Head of caudate nucleus (tissue), 42 donors: ENCODE measurements at regions of chr17 and their contacts with region 1.

Region 1: DNA sequence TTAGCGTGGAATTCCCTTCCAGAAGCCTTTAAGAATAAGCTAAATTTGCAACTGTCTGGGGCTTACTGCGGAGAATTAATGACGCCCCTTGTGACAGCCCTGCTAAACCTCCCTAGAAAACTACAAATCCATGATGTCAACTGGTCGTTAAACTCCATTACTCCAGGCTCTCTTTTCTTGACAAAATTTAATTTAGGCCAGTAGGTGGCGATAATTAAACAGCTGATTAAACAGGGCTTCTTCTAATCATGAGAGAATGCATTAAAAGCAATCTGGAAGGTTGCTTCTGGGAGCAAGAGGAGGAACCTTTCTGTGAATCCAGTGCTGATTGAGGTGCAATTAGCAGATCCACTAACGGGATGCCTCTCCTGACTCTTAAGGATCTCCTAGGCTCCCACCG is 8.1 kb upstream of the NLRP1 start:
- DNase-seq: peak in 2 of 42 donors; percentile 24 to 50

Region 2: GRCh38 chr17:5706577-5707216 is 114.3 kb after region 1 on chr17:
- intact Hi-C with region 1: loop called (anchors 5 kb)
- DNase-seq: peak; percentile 18 to 83 (median 64)

Region 3: GRCh38 chr17:6045621-6046357 is 453.4 kb after region 1 on chr17:
- intact Hi-C with region 1: loop called (anchors 10 kb)
- DNase-seq: peak in 2 of 42 donors; percentile 16 to 35

Region 4: GRCh38 chr17:6421700-6422604 is 829.6 kb after region 1 on chr17:
- intact Hi-C with region 1: loop called (anchors 2 kb)
- DNase-seq: peak; percentile 66 to 95 (median 86)